Common myeloid progenitor, CD34-positive (primary cell): ENCODE measurements at regions of chr17 and their contacts with region 1.

Region 1: DNA sequence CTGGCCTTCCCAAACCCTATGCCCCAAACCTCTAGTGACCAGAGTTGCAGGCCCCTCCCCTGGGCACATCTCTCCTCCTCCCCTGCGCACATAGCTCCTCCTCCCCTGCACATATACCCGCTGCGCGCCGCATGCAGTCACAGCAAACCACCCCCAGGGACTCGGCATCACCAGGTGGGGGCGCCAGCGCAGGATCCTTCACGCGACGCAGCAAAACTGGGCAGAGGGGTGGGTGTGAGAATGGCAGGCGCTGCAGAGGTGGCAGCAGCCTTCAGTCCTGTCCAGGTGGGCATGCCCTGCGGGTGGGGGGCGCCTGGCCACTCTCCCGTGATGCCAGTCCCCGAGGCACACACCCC is 5.6 kb downstream of the CORO6 start:
- DNase-seq: peak; percentile 89 to 94 (median 94)
- H3K4me3 ChIP-seq: peak overlapping the region in 6 of 7 experiments; percentile 9 to 82 (median 58)
- H3K27ac ChIP-seq: no peak overlapping the region
- H3K4me1 ChIP-seq: peaks cover 2 to 66% (median 59%) of the 10 kb centered on the region in 4 experiments
- H3K27me3 ChIP-seq: peaks cover 0 to 32% (median 18%) of the 10 kb centered on the region in 5 experiments

Region 2: GRCh38 chr17:29568331-29569244 is 48.5 kb before region 1 on chr17 and contains the start of gene TP53I13:
- CTCF ChIA-PET with region 1: interaction called, 179 read pairs
- POLR2A ChIA-PET with region 1: interaction called, 3 read pairs
- DNase-seq: peak; percentile 80 to 91 (median 87)
- H3K4me3 ChIP-seq: peak within 1 kb of the TSS; percentile 53 to 91 (median 77)
- H3K27ac ChIP-seq: peak within 1 kb of the TSS; percentile 54 to 81
- H3K4me1 ChIP-seq: peaks cover 3 to 61% (median 48%) of the 10 kb centered on the region in 4 experiments
- H3K27me3 ChIP-seq: no peaks in the 10 kb centered on the region

Region 3: GRCh38 chr17:29589524-29590410 is 27.3 kb before region 1 on chr17 and contains the start of gene GIT1:
- CTCF ChIA-PET with region 1: interaction called, 179 read pairs
- POLR2A ChIA-PET with region 1: interaction called, 6 read pairs
- DNase-seq: peak; percentile 81 to 90 (median 88)
- H3K4me3 ChIP-seq: peak within 1 kb of the TSS; percentile 56 to 90 (median 78)
- H3K27ac ChIP-seq: peak within 1 kb of the TSS in 1 of 2 experiments; percentile 54
- H3K4me1 ChIP-seq: peaks cover 4 to 86% (median 85%) of the 10 kb centered on the region in 4 experiments
- H3K27me3 ChIP-seq: no peaks in the 10 kb centered on the region

Region 4: GRCh38 chr17:29627955-29628354 is 10.9 kb after region 1 on chr17:
- CTCF ChIA-PET with region 1: interaction called, 22 read pairs
- POLR2A ChIA-PET with region 1: no interaction called
- DNase-seq: no peak
- H3K4me3 ChIP-seq: no peak overlapping the region
- H3K27ac ChIP-seq: no peak overlapping the region
- H3K4me1 ChIP-seq: peaks cover 0 to 8% (median 5%) of the 10 kb centered on the region in 4 experiments
- H3K27me3 ChIP-seq: peaks cover 0 to 2% (median 0%) of the 10 kb centered on the region in 5 experiments

Region 5: GRCh38 chr17:29777663-29778062 is 160.6 kb after region 1 on chr17:
- CTCF ChIA-PET with region 1: interaction called, 19 read pairs
- POLR2A ChIA-PET with region 1: no interaction called
- DNase-seq: no peak
- H3K4me3 ChIP-seq: no peak overlapping the region
- H3K27ac ChIP-seq: no peak overlapping the region
- H3K4me1 ChIP-seq: peaks cover 0 to 6% (median 3%) of the 10 kb centered on the region in 4 experiments
- H3K27me3 ChIP-seq: no peaks in the 10 kb centered on the region

Region 6: DNA sequence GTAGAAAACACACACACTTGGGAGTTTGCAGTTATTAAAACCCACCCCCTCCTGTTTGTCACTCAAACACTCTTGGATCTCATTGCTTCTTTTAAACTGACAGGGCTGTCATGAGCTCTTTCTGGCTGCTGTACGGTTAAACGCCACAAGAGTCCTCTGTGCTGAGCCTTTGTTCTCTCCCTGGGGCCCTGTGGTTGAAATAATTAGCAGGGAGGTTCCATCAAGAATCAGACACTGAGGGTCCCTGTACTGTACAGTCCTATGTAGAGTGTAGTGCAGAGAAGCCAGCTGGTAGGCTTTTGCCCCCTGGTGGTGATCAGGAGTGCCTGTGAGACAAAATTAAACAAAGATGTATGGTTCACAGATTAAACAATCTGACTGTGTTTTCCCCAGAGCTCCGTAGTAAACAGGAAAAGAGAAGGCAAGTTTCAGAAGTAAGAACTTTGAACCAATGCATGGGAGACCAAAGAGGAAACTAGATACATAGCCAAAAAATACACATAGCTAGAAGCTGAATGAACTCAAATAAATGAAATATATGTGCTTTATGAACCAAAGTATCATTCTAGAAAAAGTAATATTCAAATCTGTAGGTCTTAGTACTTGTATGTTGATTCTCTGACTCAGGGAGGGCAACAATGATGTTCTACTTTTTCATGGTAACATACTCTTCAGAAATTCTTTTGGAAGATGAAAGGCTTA is 314.3 kb after region 1 on chr17:
- CTCF ChIA-PET with region 1: interaction called, 23 read pairs
- POLR2A ChIA-PET with region 1: no interaction called
- DNase-seq: peak; percentile 91 to 96 (median 95)
- H3K4me3 ChIP-seq: peak overlapping the region in 6 of 7 experiments; percentile 83 to 98 (median 94)
- H3K27ac ChIP-seq: no peak overlapping the region
- H3K4me1 ChIP-seq: peaks cover 14 to 44% (median 26%) of the 10 kb centered on the region in 4 experiments
- H3K27me3 ChIP-seq: no peaks in the 10 kb centered on the region